Colonic mucosa (tissue), 4 donors: ENCODE measurements at regions of chr1 and their contacts with region 1.

Region 1: DNA sequence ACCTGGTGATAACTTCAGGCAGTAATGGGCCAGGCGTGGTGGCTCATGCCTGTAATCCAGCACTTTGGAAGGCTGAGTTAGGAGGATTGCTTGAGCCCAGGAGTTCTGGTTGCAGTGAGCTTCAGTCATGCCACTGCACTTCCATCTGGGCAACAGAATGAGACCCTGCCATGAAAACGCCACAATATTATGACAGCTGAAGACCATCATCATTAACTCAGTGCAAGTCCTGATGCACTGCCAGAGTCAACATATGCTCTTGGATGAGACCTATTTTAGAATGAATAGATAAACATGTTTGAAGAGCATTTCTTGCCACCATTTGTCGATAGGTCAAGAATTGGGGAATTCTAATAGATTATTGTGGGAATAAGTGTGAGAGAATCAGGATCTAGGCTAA is 26.4 kb downstream of the HENMT1 start:
- DNase-seq: no peak
- H3K4me3 ChIP-seq: no peak overlapping the region
- H3K27ac ChIP-seq: no peak overlapping the region
- H3K4me1 ChIP-seq: no peaks in the 10 kb centered on the region
- H3K27me3 ChIP-seq: no peaks in the 10 kb centered on the region
- CTCF ChIP-seq: no peak

Region 2: GRCh38 chr1:108595507-108595906 is 39.0 kb before region 1 on chr1:
- intact Hi-C with region 1: loop called (anchors 5 kb)
- DNase-seq: no peak
- H3K4me3 ChIP-seq: no peak overlapping the region
- H3K27ac ChIP-seq: no peak overlapping the region
- H3K4me1 ChIP-seq: peaks cover 10% of the 10 kb centered on the region
- H3K27me3 ChIP-seq: no peaks in the 10 kb centered on the region
- CTCF ChIP-seq: no peak

Region 3: GRCh38 chr1:108916788-108917187 is 282.3 kb after region 1 on chr1:
- intact Hi-C with region 1: no loop called
- DNase-seq: no peak
- H3K4me3 ChIP-seq: no peak overlapping the region
- H3K27ac ChIP-seq: no peak overlapping the region
- H3K4me1 ChIP-seq: no peaks in the 10 kb centered on the region
- H3K27me3 ChIP-seq: no peaks in the 10 kb centered on the region
- CTCF ChIP-seq: no peak